Tibial artery (tissue), 4 donors: ENCODE measurements at regions of chr2 and their contacts with region 1.

Region 1: GRCh38 chr2:112433932-112434730 is 686 bp upstream of the RGPD8 start:
- DNase-seq: peak in 1 of 2 donors; percentile 62
- H3K4me3 ChIP-seq: no peak overlapping the region
- H3K27ac ChIP-seq: no peak overlapping the region
- H3K4me1 ChIP-seq: peaks cover 0 to 15% (median 3%) of the 10 kb centered on the region in 4 donors
- H3K27me3 ChIP-seq: peaks cover 0 to 13% of the 10 kb centered on the region in 2 donors
- CTCF ChIP-seq: no peak

Region 2: GRCh38 chr2:112254466-112255239 is 179.5 kb before region 1 on chr2 and contains the start of gene ZC3H8:
- intact Hi-C with region 1: loop called (anchors 10 kb)
- DNase-seq: peak; percentile 89 to 96
- H3K4me3 ChIP-seq: peak within 1 kb of the TSS; percentile 62 to 68
- H3K27ac ChIP-seq: peak within 1 kb of the TSS; percentile 70
- H3K4me1 ChIP-seq: peaks cover 0 to 14% (median 9%) of the 10 kb centered on the region in 4 donors
- H3K27me3 ChIP-seq: no peaks in the 10 kb centered on the region
- CTCF ChIP-seq: no peak